MCF 10A (cell line): ENCODE measurements at regions of chr7 and their contacts with region 1.

Region 1: DNA sequence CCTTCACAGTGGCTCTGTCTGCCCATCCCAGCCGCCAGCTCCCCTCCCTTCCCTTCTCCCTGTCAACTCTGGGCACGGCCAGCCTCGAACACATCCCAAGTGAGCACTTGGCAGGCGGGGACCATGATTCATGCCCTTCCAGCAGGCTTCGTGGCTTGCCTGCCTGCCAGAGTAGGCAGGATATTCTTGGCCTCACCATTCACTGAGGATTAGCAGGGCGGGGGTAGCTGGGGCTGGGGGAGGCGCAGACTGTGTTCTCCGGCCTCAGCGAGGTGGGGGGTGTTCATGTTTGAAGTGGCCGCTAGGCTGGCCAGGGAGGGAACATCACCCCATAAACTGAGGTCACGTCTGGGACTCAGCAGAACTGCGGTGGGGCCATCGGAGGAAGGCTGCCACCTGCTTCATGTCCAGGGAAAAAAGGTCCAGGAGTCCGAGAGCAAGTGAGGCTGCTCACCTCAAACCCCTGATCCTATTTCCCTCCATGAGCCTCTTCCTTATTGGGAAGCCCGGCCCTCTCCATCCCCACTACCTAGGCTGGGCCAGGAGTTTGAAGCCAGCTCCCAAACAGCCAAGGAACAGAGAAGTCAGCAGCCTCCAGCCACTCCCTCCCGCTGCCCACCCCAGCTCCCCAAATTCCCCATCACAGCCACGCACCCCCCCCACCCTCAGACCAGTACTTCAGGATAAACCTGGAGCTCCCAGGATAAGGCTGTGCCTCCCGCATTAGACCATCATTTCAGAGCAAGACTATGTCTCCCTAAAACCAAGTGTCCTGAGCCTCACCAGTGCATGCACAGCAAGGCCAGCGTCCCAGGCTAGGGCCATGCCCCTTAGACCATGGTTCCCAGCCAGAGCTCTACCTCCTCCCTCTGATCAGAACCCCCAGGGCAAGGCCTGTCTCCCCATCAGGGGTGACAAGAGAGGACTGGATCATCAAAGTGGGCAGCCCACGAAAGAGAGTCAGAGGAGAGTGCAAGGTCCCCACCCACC is 42.8 kb upstream of the RABGEF1 start:
- DNase-seq: peak; percentile 43
- H3K4me3 Mint-ChIP-seq: no peak overlapping the region
- H3K27ac Mint-ChIP-seq: no peak overlapping the region
- H3K4me1 Mint-ChIP-seq: peaks cover 19% of the 10 kb centered on the region
- H3K27me3 Mint-ChIP-seq: no peaks in the 10 kb centered on the region
- CTCF ChIP-seq: no peak

Region 2: GRCh38 chr7:66731986-66732385 is 34.2 kb after region 1 on chr7:
- CTCF ChIA-PET with region 1: no interaction called
- POLR2A ChIA-PET with region 1: interaction called, 3 read pairs
- intact Hi-C with region 1: loop called (anchors 2 kb)
- DNase-seq: no peak
- H3K4me3 Mint-ChIP-seq: no peak overlapping the region
- H3K27ac Mint-ChIP-seq: no peak overlapping the region
- H3K4me1 Mint-ChIP-seq: no peaks in the 10 kb centered on the region
- H3K27me3 Mint-ChIP-seq: no peaks in the 10 kb centered on the region
- CTCF ChIP-seq: no peak